Mucosa of descending colon (tissue), 3 donors: ENCODE measurements at regions of chr1 and their contacts with region 1.

Region 1: DNA sequence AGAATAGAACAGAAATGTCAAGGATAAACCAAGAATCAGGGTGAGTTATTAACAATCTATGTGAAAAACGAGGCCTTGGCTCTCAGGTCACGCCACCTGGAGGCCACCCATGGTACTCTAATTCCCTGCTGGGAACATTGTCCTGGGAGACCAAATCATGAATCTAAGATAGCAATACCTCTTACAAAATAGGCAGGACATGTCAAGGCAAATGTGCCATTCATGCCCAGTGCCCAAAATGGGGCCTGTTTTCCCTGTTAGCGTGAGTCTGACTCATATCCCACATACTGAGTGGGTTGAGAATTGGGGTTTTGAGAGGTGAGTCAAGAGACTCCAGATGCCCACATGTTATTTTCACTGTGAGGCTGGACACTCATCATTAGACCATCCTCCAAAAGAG is 380.8 kb downstream of the HHIPL2 start:
- DNase-seq: peak in 2 of 3 donors; percentile 49 to 65
- ATAC-seq: peak; percentile 45
- H3K4me3 ChIP-seq: no peak overlapping the region
- H3K4me1 ChIP-seq: no peaks in the 10 kb centered on the region
- CTCF ChIP-seq: peak; percentile 34

Region 2: GRCh38 chr1:221478050-221478949 is 688.8 kb before region 1 on chr1:
- intact Hi-C with region 1: loop called in 1 of 2 experiments (anchors 10 kb)
- DNase-seq: peak in 2 of 3 donors; percentile 22 to 36
- ATAC-seq: peak; percentile 61
- H3K4me3 ChIP-seq: no peak overlapping the region
- H3K4me1 ChIP-seq: no peaks in the 10 kb centered on the region
- CTCF ChIP-seq: no peak